ENCODE measurements at regions of chr2 and their contacts with region 1.

Region 1: DNA sequence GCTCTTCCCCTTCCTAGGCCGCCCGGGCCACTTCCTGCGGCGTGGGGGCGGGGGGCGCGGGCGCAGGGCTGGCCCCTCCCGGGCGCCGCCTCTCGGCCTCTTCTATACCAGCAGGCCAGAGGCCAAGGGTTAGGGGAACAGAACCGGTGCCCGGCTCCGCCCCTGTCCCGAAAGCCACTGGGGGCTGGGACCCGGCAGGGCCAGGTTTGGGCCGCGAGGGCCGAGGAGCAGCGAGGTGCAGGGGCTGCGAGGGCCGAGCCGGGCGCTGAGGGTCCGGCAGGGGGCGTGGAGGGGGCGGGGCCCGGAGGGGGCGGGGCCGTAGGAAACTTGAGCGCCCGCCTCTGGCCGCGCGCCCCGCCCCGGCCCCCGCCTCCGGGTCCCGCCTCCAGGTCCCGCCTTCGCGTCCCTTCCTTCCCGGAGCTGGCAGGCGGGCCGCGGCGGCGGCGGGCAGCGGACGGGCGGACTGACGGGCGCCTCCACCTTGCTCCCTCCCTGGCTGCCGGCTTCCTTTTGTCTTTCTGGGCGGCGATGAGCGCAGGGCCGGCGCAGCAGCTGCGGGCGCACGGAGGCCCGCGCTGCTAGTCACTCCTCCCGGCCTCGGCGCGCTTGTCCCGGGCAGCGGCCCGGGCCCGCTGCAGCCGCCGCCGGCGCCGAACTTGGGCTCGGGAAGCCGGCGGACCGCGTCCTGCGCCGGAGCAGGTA is at the start of gene HPCAL1:
- DNase-seq: peak; percentile 89 to 95
- H3K4me3 ChIP-seq: peak within 1 kb of the TSS; percentile 42 to 63 (median 49)
- H3K27ac ChIP-seq: no peak within 1 kb of the TSS; the same call in 1 of the 2 replicates
- H3K4me1 ChIP-seq: peaks cover 0 to 14% (median 10%) of the 10 kb centered on the region in 4 experiments; a peak in 6 of 7 replicates
- H3K27me3 ChIP-seq: peaks cover 11 to 41% (median 32%) of the 10 kb centered on the region in 4 experiments
- CTCF ChIP-seq: peak; percentile 45 to 74 (median 55)
- EP300 ChIP-seq: peak in 1 of 2 experiments; percentile 8; a peak in 1 of 3 replicates
- POLR2A ChIP-seq: peak in 1 of 2 experiments; percentile 48; a peak in 1 of 3 replicates
- RAD21 ChIP-seq: peak; percentile 32 to 54
- total RNA-seq, gene HPCAL1: 8.6 and 8.7 TPM in 2 replicates

Region 2: GRCh38 chr2:10225291-10226037 is 77.2 kb before region 1 on chr2:
- CTCF ChIA-PET with region 1: interaction called, 12 read pairs
- POLR2A ChIA-PET with region 1: no interaction called
- DNase-seq: no peak
- H3K4me3 ChIP-seq: no peak overlapping the region
- H3K27ac ChIP-seq: no peak overlapping the region
- H3K4me1 ChIP-seq: peaks cover 0 to 3% (median under 1%) of the 10 kb centered on the region in 4 experiments; a peak in 2 of 7 replicates
- H3K27me3 ChIP-seq: no peaks in the 10 kb centered on the region
- CTCF ChIP-seq: no peak
- EP300 ChIP-seq: no peak
- POLR2A ChIP-seq: no peak
- RAD21 ChIP-seq: no peak

Region 3: DNA sequence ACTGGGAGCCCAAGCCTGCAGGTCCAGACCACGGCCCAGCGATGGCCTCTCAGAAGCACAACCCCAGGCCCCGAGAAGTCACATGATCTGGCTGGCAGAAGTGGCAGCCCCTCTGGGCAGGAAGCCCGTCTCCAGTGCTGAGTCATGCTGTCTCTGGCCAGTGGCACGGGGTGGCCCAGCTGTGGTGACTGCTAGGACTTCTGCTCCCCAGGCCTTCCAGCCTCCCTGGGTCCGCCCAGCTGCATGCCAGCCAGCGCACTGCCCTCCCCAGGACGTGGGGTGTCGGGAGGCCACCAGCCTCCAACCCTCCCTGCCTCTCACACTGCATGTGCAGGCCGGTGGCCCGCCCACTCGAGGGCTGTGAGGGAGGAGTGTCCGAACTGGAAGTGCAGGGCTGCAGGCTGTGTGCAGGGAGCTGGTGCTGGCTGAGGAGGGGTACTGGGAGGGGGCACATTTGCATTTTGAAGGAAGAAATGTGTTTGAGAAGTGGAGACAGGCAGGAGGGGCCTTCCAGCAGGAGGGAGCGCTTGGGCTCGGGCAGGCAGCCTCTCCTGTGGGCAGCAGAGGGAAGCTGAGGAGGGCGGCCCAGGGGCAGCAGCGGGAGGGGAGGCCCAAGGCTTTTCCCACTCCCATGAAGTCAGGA is 17.0 kb before region 1 on chr2:
- CTCF ChIA-PET with region 1: interaction called, 48 read pairs
- POLR2A ChIA-PET with region 1: interaction called, 5 read pairs
- DNase-seq: peak in 1 of 2 experiments; percentile 54
- H3K4me3 ChIP-seq: no peak overlapping the region
- H3K27ac ChIP-seq: no peak overlapping the region; the same call in 1 of the 2 replicates
- H3K4me1 ChIP-seq: peaks cover 0 to 8% (median 4%) of the 10 kb centered on the region in 4 experiments; a peak in 5 of 7 replicates
- H3K27me3 ChIP-seq: no peaks in the 10 kb centered on the region; a peak in 1 of 7 replicates
- CTCF ChIP-seq: no peak
- EP300 ChIP-seq: no peak
- POLR2A ChIP-seq: no peak
- RAD21 ChIP-seq: no peak

Region 4: GRCh38 chr2:10331027-10331701 is 28.5 kb after region 1 on chr2:
- CTCF ChIA-PET with region 1: interaction called, 24 read pairs
- POLR2A ChIA-PET with region 1: no interaction called
- DNase-seq: no peak
- H3K4me3 ChIP-seq: no peak overlapping the region
- H3K27ac ChIP-seq: no peak overlapping the region; the same call in 1 of the 2 replicates
- H3K4me1 ChIP-seq: peaks cover 3 to 44% (median 19%) of the 10 kb centered on the region in 4 experiments
- H3K27me3 ChIP-seq: 0 out of 7 replicates have a peak, but pooled peaks cover 0 to 1% (median 0%) of the 10 kb centered on the region in 4 experiments
- CTCF ChIP-seq: peak in 1 of 3 experiments; percentile 5; a peak in 1 of 4 replicates
- EP300 ChIP-seq: no peak
- POLR2A ChIP-seq: no peak
- RAD21 ChIP-seq: no peak

Region 5: DNA sequence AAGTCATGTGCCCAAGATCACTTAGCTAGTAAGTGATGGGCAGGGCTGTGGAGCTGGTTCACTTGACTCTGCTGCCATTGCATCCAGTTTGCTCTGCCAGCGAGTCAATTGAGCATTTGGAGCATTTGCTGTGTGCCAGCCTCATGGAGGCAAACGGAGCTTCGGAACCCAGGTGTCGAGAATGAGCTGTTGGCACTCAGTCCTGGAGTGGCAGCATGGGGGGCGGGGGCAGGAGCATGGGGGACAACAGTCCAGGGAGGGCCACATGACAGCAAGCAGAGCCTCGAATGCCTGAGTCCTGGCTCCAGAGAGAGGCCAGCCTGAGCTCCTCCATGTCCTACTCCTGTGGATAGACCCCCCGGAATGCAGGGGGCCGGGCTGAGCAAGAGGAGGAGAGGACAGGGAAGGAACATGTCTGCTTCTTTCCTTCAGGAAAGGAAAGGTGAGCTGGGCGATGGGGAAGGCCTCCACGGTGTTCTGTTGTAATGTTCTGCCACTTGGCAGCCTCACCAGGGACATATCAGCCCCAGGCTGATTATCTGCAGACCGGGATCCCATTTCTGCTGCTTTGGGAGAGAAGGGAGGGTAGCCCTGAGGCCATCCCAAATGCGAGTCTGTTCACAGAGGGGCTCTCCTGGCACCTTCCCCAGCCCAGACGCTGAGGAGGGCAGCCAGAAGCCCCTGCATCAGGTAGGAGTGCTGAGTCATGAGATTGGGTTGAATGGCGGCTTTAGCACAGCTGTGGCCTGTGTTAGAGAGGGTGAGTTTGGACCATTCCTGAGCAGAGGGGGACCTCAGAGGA is 59.7 kb after region 1 on chr2:
- CTCF ChIA-PET with region 1: interaction called, 10 read pairs
- POLR2A ChIA-PET with region 1: no interaction called
- DNase-seq: no peak
- H3K4me3 ChIP-seq: no peak overlapping the region
- H3K27ac ChIP-seq: no peak overlapping the region
- H3K4me1 ChIP-seq: peaks cover 0 to 4% (median 0%) of the 10 kb centered on the region in 4 experiments; a peak in 1 of 7 replicates
- H3K27me3 ChIP-seq: no peaks in the 10 kb centered on the region
- CTCF ChIP-seq: no peak
- EP300 ChIP-seq: no peak
- POLR2A ChIP-seq: no peak
- RAD21 ChIP-seq: no peak